A673 (cell line): ENCODE measurements at regions of chr5 and their contacts with region 1.

Region 1: GRCh38 chr5:168831383-168831782 is 252.2 kb upstream of the PANK3 start:
- DNase-seq: no peak
- H3K4me3 ChIP-seq: no peak overlapping the region
- H3K27ac ChIP-seq: no peak overlapping the region
- H3K4me1 ChIP-seq: no peaks in the 10 kb centered on the region
- H3K27me3 ChIP-seq: peaks cover 72% of the 10 kb centered on the region
- CTCF ChIP-seq: no peak

Region 2: DNA sequence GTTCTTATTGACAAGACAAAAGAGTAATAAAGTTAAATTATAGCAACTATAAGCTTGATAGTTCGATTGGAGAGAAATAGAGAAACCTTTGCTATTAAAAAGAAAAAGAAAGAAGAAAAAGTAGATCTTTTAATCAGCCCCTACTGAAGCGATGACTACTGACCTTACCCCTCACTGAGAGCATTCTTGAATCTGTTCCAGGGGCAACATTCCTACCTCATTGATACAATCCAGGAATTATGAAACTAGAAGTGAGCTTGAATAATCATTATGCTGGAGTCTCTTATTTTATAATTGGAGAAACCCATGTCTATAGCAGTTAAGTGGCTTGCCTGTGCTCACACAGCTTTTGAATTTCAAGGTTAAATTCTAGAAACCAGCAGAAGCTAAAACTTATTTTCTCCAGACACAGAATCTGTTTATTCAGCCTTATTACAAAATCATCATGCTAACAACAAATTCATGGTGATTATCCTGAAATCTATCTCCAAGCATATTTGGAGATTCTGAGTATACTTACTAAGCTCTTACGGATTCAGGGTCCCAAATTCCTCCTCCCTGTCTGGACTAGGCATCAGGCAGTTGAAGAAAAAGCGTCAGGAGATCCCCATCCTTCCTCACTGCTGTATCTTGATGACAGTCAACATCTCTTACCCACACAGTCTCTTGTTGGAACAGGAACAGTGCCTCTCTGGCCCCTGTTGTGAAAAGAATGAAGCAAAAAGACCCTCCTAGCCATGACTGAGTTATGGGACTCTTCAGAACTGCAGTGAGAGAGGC is 1087.5 kb before region 1 on chr5:
- CTCF ChIA-PET with region 1: no interaction called
- POLR2A ChIA-PET with region 1: no interaction called
- intact Hi-C with region 1: no loop called
- DNase-seq: peak; percentile 73
- H3K4me3 ChIP-seq: no peak overlapping the region
- H3K27ac ChIP-seq: peak overlapping the region; percentile 51
- H3K4me1 ChIP-seq: peaks cover 34% of the 10 kb centered on the region
- H3K27me3 ChIP-seq: no peaks in the 10 kb centered on the region
- CTCF ChIP-seq: no peak

Region 3: GRCh38 chr5:168405145-168405544 is 426.2 kb before region 1 on chr5:
- CTCF ChIA-PET with region 1: interaction called, 14 read pairs
- POLR2A ChIA-PET with region 1: no interaction called
- intact Hi-C with region 1: no loop called
- DNase-seq: no peak
- H3K4me3 ChIP-seq: no peak overlapping the region
- H3K27ac ChIP-seq: no peak overlapping the region
- H3K4me1 ChIP-seq: no peaks in the 10 kb centered on the region
- H3K27me3 ChIP-seq: no peaks in the 10 kb centered on the region
- CTCF ChIP-seq: no peak